CD8-positive, alpha-beta memory T cell (primary cell): ENCODE measurements at regions of chr10 and their contacts with region 1.

Region 1: DNA sequence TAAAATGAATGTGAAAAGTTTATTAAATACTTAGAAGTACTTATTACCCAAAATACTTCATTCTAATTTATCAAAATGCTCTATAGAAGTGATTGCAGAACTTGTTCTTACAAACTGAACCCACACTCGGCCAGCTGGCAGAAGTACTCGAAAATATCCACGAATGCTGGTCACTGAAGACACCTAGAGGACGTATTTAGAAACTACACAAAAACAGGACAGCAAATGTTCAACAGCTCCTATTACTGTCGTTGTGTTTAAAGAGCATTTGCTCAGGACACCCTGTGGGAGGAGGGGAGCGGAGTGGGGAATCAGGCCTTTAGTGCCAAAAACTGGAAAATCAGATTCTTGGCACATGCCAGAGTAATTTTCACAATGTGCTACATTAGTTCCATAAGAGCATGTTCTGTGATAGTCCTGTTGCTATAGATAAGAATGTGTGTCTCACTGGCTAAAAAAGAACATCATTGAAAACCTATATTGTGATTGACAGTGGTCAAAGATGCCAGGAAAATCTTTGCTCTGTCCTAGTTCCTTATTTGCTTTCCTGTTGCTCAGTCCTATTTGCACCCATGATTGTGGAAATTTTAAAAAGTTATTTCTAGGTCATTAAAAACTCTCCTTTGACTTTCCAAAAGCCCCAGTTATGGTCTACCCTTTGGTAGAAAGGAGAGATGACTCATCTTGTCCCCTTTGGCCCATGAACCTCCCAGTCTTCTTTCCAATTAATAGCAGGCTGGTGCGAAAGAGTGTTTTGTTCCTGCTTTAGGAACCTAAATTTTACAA is 49.0 kb upstream of the NRBF2 start:
- DNase-seq: peak; percentile 2 to 54 (median 39)
- H3K4me3 ChIP-seq: no peak overlapping the region
- H3K4me3 Mint-ChIP-seq: no peak overlapping the region
- H3K27ac ChIP-seq: no peak overlapping the region
- H3K27ac Mint-ChIP-seq: no peak overlapping the region
- H3K4me1 ChIP-seq: no peaks in the 10 kb centered on the region
- H3K4me1 Mint-ChIP-seq: no peaks in the 10 kb centered on the region
- H3K27me3 ChIP-seq: no peaks in the 10 kb centered on the region
- H3K27me3 Mint-ChIP-seq: peaks cover 3 to 12% of the 10 kb centered on the region in 2 donors

Region 2: DNA sequence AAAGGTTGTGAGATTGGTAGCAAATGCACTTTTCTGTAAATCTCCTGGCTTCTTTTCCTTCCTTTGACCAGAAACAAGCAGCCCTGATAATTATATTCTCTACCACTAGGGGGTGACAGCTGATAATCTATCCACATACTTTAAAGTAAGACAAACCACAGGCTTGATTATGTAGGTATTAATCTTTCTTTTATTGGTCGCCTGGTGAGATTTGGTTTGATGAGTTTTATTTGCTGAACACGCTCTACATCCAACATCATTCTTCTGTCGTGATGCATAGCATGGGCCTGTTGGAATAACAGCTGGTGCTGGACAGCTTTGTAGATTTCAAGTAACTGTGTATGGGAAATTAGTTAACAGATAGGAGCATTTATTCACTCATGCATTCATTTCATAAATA is 646.4 kb before region 1 on chr10:
- CTCF ChIA-PET with region 1: interaction called, 20 read pairs
- POLR2A ChIA-PET with region 1: no interaction called
- DNase-seq: peak in 2 of 5 donors; percentile 46 to 58
- H3K4me3 ChIP-seq: no peak overlapping the region
- H3K4me3 Mint-ChIP-seq: no peak overlapping the region
- H3K27ac ChIP-seq: no peak overlapping the region
- H3K27ac Mint-ChIP-seq: no peak overlapping the region
- H3K4me1 ChIP-seq: no peaks in the 10 kb centered on the region
- H3K4me1 Mint-ChIP-seq: peaks cover 0 to 3% (median 2%) of the 10 kb centered on the region in 3 donors
- H3K27me3 ChIP-seq: no peaks in the 10 kb centered on the region
- H3K27me3 Mint-ChIP-seq: peaks cover 1 to 9% of the 10 kb centered on the region in 2 donors

Region 3: GRCh38 chr10:62594093-62594520 is 490.0 kb before region 1 on chr10:
- CTCF ChIA-PET with region 1: interaction called, 13 read pairs
- POLR2A ChIA-PET with region 1: no interaction called
- DNase-seq: peak; percentile 28 to 62 (median 34)
- H3K4me3 ChIP-seq: no peak overlapping the region
- H3K4me3 Mint-ChIP-seq: no peak overlapping the region
- H3K27ac ChIP-seq: no peak overlapping the region
- H3K27ac Mint-ChIP-seq: no peak overlapping the region
- H3K4me1 ChIP-seq: no peaks in the 10 kb centered on the region
- H3K4me1 Mint-ChIP-seq: peaks cover 0 to 5% (median 0%) of the 10 kb centered on the region in 3 donors
- H3K27me3 ChIP-seq: no peaks in the 10 kb centered on the region
- H3K27me3 Mint-ChIP-seq: peaks cover 7 to 10% of the 10 kb centered on the region in 2 donors

Region 4: GRCh38 chr10:62610649-62611229 is 473.4 kb before region 1 on chr10:
- CTCF ChIA-PET with region 1: interaction called, 23 read pairs
- POLR2A ChIA-PET with region 1: no interaction called
- DNase-seq: peak; percentile 48 to 79 (median 68)
- H3K4me3 ChIP-seq: no peak overlapping the region
- H3K4me3 Mint-ChIP-seq: no peak overlapping the region
- H3K27ac ChIP-seq: no peak overlapping the region
- H3K27ac Mint-ChIP-seq: no peak overlapping the region
- H3K4me1 ChIP-seq: peaks cover 4% of the 10 kb centered on the region
- H3K4me1 Mint-ChIP-seq: peaks cover 9 to 17% (median 11%) of the 10 kb centered on the region in 3 donors
- H3K27me3 ChIP-seq: no peaks in the 10 kb centered on the region
- H3K27me3 Mint-ChIP-seq: peaks cover 3 to 12% of the 10 kb centered on the region in 2 donors